ENCODE measurements at regions of chr17 and their contacts with region 1.

Region 1: GRCh38 chr17:15930426-15930825 is 14.5 kb upstream of the ADORA2B start:
- DNase-seq: no peak
- ATAC-seq: no peak
- H3K4me3 ChIP-seq: no peak overlapping the region
- H3K27ac ChIP-seq: no peak overlapping the region
- H3K4me1 ChIP-seq: 0 out of 2 replicates have a peak, but pooled peaks cover 5% of the 10 kb centered on the region
- H3K27me3 ChIP-seq: no peaks in the 10 kb centered on the region
- CTCF ChIP-seq: no peak

Region 2: DNA sequence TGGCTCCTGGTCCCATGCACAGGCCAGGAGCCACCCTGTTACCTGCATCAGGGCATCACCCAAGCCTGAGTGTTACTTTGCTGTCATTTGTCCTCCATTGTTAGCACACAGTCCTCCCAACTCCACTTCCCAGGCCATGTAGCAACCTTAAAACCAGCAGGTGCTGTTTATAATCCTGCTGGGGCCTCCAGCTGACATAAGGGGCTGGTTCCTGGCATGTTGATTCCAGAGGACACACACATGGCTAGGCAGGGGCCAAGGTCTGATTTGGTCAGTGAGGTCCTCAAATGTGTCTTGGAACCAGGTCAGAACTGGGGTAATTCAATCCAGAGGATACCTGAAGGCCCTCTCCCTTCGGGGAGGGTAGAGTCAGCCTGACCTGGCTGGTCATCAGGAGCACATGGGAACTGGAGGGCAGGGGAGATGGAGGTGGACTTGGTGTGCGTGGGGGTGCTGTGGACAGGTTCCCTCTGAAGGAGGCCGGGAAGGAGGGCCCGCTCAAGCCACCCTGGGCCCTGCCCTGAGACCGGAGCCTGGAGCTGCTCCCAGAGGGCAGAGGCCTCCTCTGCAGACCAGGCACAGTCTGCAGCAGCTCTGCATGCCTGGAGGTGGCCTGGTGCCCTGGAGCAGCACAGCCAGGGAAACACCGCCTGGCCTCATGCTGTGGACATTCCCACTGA is 21.1 kb after region 1 on chr17:
- CTCF ChIA-PET with region 1: no interaction called
- POLR2A ChIA-PET with region 1: interaction called, 18 read pairs
- in situ Hi-C with region 1: no loop called
- intact Hi-C with region 1: no loop called
- DNase-seq: no peak
- ATAC-seq: peak; percentile 39; the same call in 1 of the 2 replicates
- H3K4me3 ChIP-seq: no peak overlapping the region
- H3K27ac ChIP-seq: peak overlapping the region; percentile 90
- H3K4me1 ChIP-seq: peaks cover 74% of the 10 kb centered on the region
- H3K27me3 ChIP-seq: no peaks in the 10 kb centered on the region
- CTCF ChIP-seq: no peak

Measured in Panc1 (cell line).